Natural killer cell (primary cell): ENCODE measurements at regions of chr19 and their contacts with region 1.

Region 1: GRCh38 chr19:38729653-38730469 is 14.4 kb downstream of the CAPN12 start:
- DNase-seq: peak; percentile 72 to 84
- ATAC-seq: peak; percentile 18 to 52 (median 38)
- H3K4me3 ChIP-seq: no peak overlapping the region
- H3K4me3 Mint-ChIP-seq: peak overlapping the region; percentile 72
- H3K27ac ChIP-seq: no peak overlapping the region
- H3K27ac Mint-ChIP-seq: peak overlapping the region; percentile 80 to 84
- H3K4me1 ChIP-seq: peaks cover 90% of the 10 kb centered on the region
- H3K4me1 Mint-ChIP-seq: peaks cover 61 to 77% of the 10 kb centered on the region in 2 donors
- H3K27me3 ChIP-seq: no peaks in the 10 kb centered on the region
- H3K27me3 Mint-ChIP-seq: no peaks in the 10 kb centered on the region
- CTCF ChIP-seq: peak; percentile 83

Region 2: GRCh38 chr19:38699027-38699346 is 30.9 kb before region 1 on chr19:
- intact Hi-C with region 1: loop called (anchors 5 kb)
- DNase-seq: peak in 1 of 2 donors; percentile 34
- ATAC-seq: peak; percentile 48 to 77 (median 68)
- H3K4me3 ChIP-seq: no peak overlapping the region
- H3K4me3 Mint-ChIP-seq: peak overlapping the region; percentile 81
- H3K27ac ChIP-seq: no peak overlapping the region
- H3K27ac Mint-ChIP-seq: peak overlapping the region; percentile 89 to 93
- H3K4me1 ChIP-seq: peaks cover 61% of the 10 kb centered on the region
- H3K4me1 Mint-ChIP-seq: peaks cover 58 to 64% of the 10 kb centered on the region in 2 donors
- H3K27me3 ChIP-seq: no peaks in the 10 kb centered on the region
- H3K27me3 Mint-ChIP-seq: no peaks in the 10 kb centered on the region
- CTCF ChIP-seq: no peak

Region 3: GRCh38 chr19:38718747-38719543 is 10.9 kb before region 1 on chr19:
- intact Hi-C with region 1: no loop called
- DNase-seq: no peak
- ATAC-seq: peak in 1 of 3 donors; percentile 3
- H3K4me3 ChIP-seq: no peak overlapping the region
- H3K4me3 Mint-ChIP-seq: no peak overlapping the region
- H3K27ac ChIP-seq: no peak overlapping the region
- H3K27ac Mint-ChIP-seq: no peak overlapping the region
- H3K4me1 ChIP-seq: no peaks in the 10 kb centered on the region
- H3K4me1 Mint-ChIP-seq: peaks cover 0 to 3% of the 10 kb centered on the region in 2 donors
- H3K27me3 ChIP-seq: no peaks in the 10 kb centered on the region
- H3K27me3 Mint-ChIP-seq: no peaks in the 10 kb centered on the region
- CTCF ChIP-seq: no peak